ENCODE measurements at regions of chr4 and their contacts with region 1.

Region 1: DNA sequence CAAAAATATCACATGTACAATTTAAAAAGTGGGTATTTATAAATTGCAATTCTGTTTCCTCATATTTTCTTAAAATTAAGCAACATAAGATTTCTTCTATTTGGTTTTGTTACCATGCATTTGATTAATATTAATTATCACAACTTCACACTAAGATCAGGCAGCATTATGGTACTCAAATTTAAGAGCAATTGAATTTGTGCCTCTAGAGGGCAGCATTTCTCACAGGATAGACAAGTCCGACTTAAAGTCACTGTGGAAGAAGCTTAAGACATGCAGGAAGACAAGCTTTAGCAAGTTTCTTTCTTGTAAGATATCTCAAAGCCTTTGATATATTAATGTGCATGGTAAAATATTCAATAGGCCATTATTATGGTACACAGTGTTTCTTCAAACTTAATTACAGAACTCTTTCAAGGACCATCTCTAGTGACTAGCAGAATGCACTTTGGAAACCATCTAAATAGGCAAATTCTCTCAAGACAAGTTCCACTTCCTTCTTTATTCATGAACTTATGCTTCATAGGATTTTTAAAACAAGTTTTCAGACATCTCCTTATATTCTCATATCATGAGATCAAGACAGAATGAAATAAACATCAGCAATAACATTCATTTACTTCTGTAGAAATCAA is 35.0 kb downstream of the FBXW7 start:
- DNase-seq: peak; percentile 90
- H3K4me3 ChIP-seq: peak overlapping the region; percentile 17
- H3K27ac ChIP-seq: peak overlapping the region; percentile 19
- H3K4me1 ChIP-seq: peaks cover 36% of the 10 kb centered on the region
- CTCF ChIP-seq: peak; percentile 99

Region 2: DNA sequence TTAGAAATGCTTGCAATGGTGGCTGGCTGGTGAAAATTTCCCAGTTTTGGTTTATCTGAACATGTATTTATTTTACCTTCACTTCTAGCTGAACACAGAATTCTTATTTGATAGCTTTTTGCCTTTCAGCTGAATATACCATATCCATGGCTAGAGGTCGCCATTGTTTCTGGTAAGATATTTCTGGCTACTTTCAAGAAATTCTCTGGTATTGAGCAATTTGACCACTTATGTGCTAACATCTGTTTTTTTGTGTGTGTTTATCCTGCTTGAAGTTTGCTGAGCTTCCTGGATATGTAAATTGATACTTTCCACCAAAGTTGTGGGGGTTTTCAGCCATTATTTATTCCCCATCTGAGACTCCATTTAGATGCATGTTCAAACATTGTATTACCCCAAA is 40.4 kb before region 1 on chr4:
- CTCF ChIA-PET with region 1: interaction called, 3 read pairs
- POLR2A ChIA-PET with region 1: interaction called, 16 read pairs
- intact Hi-C with region 1: loop called (anchors 2 kb)
- DNase-seq: peak; percentile 29
- H3K4me3 ChIP-seq: no peak overlapping the region
- H3K27ac ChIP-seq: no peak overlapping the region
- H3K4me1 ChIP-seq: peaks cover 71% of the 10 kb centered on the region
- CTCF ChIP-seq: peak; percentile 74

Region 3: DNA sequence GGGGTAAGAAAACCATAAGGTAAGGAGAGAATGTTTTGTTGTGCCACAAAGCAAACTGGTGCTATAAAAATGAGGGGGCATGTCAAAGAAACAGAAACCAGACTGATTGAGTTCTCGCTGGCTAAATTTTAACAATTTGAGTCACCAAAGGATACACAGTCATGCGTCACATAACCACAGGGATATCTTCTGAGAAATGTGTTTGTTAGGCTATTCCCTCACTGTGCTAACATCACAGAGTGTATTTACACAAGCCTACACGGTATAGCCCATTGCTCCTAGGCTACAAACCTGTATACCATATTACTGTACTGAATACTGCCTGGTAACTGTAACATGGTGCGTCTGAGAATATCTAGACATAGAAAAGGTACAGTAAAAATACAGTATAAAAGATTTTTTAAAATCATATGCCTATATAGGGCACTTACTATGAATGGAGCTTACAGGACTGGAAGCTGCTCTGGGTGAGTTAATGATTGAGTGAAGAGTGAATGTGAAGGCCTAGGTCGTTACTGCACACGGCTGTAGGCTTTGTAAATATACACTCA is 15.1 kb before region 1 on chr4:
- CTCF ChIA-PET with region 1: no interaction called
- POLR2A ChIA-PET with region 1: interaction called, 25 read pairs
- intact Hi-C with region 1: no loop called
- DNase-seq: no peak
- H3K4me3 ChIP-seq: no peak overlapping the region
- H3K27ac ChIP-seq: no peak overlapping the region
- H3K4me1 ChIP-seq: no peaks in the 10 kb centered on the region
- CTCF ChIP-seq: no peak

Region 4: DNA sequence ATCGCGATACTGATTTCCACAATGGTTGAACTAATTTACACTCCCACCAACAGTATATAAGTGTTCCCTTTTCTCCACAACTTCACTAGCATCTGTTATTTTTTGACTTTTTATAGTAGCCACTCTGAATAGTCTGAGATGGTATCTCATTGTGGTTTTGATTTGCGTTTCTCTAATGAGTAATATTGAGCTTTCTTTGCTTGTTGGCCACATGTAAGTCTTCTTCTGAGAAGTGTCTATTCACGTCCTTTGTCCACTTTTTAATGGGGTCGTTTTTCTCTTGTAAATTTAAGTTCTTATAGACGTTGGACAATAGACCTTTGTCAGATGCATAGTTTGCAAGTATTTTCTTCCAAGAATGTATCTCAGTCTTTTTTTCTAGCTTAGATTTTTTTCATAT is 25.0 kb after region 1 on chr4:
- CTCF ChIA-PET with region 1: no interaction called
- POLR2A ChIA-PET with region 1: interaction called, 14 read pairs
- intact Hi-C with region 1: no loop called
- DNase-seq: no peak
- H3K4me3 ChIP-seq: no peak overlapping the region
- H3K27ac ChIP-seq: no peak overlapping the region
- H3K4me1 ChIP-seq: peaks cover 13% of the 10 kb centered on the region
- CTCF ChIP-seq: no peak

Region 5: GRCh38 chr4:152640058-152640833 is 139.3 kb after region 1 on chr4:
- CTCF ChIA-PET with region 1: interaction called, 17 read pairs
- POLR2A ChIA-PET with region 1: interaction called, 130 read pairs
- intact Hi-C with region 1: loop called (anchors 1 kb)
- DNase-seq: peak; percentile 44
- H3K4me3 ChIP-seq: no peak overlapping the region
- H3K27ac ChIP-seq: no peak overlapping the region
- H3K4me1 ChIP-seq: peaks cover 97% of the 10 kb centered on the region
- CTCF ChIP-seq: peak; percentile 96

Region 6: DNA sequence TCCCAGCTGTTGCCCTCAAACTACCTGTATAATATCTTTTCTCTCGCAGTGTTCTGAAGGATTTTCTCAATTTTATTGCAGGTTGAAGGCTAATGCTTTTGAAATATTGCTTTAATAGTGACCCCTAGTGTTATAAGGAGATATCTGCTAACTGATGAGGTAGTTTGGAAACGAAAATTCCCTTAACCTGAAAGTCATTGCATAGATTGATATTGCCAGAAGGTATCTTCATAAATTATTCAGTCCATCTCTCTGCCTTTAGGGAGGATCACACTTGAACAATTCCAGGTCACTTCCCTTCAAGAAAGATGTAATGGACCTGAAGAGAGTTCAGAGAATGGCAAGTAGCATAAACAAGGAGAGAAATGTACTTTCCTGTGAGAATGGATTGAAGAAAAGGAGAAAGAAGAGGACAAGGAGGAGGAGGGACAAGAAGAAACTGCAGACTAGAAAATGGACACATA is 234.5 kb after region 1 on chr4:
- CTCF ChIA-PET with region 1: no interaction called
- POLR2A ChIA-PET with region 1: interaction called, 3 read pairs
- intact Hi-C with region 1: loop called (anchors 1 kb)
- DNase-seq: peak; percentile 72
- H3K4me3 ChIP-seq: no peak overlapping the region
- H3K27ac ChIP-seq: no peak overlapping the region
- H3K4me1 ChIP-seq: no peaks in the 10 kb centered on the region
- CTCF ChIP-seq: peak; percentile 93

Measured in OCI-LY7 (cell line).